OCI-LY7 (cell line): ENCODE measurements at regions of chr3 and their contacts with region 1.

Region 1: GRCh38 chr3:52444860-52445793 is at the start of gene SEMA3G:
- DNase-seq: peak; percentile 72
- H3K4me3 ChIP-seq: no peak within 1 kb of the TSS
- H3K27ac ChIP-seq: no peak within 1 kb of the TSS
- H3K4me1 ChIP-seq: no peaks in the 10 kb centered on the region
- CTCF ChIP-seq: peak; percentile 48
- total RNA-seq, gene SEMA3G: not detected in 2 replicates

Region 2: GRCh38 chr3:52001443-52001974 is 443.6 kb before region 1 on chr3:
- CTCF ChIA-PET with region 1: no interaction called
- POLR2A ChIA-PET with region 1: no interaction called
- intact Hi-C with region 1: loop called (anchors 5 kb)
- DNase-seq: peak; percentile 90
- H3K4me3 ChIP-seq: no peak overlapping the region
- H3K27ac ChIP-seq: no peak overlapping the region
- H3K4me1 ChIP-seq: peaks cover 15% of the 10 kb centered on the region
- CTCF ChIP-seq: peak; percentile 99

Region 3: DNA sequence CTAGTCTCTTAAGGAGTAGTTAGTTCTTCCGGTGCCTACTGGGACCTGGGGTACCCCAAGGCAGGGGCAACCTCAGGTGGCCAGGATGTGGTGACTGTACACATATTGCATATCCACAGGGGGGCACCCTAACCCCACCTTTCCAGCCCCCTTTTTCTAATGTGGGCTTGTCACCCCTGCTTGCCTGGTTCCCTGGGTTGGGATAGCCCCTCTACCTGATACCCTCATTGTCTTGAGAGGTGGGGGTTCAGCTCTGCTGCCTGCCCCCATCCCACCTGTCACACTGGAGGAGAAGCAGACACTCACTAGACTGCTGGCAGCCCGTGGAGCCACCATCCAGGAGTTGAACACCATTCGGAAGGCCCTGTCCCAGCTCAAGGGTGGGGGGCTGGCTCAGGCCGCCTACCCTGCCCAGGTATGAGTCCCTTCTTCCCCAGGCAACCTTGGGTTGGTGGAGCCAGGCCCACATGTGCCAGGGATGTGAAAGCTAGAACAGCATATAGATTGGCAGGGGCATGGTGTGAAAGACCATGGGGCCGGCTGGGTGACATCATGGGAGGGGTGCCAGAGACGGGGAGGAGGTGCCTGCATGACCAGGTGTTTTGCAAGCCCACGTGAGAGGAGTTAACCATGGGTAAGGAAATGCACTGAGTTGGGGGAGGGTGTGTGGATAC is 153.5 kb before region 1 on chr3:
- CTCF ChIA-PET with region 1: no interaction called
- POLR2A ChIA-PET with region 1: no interaction called
- intact Hi-C with region 1: loop called (anchors 1 kb)
- DNase-seq: peak; percentile 71
- H3K4me3 ChIP-seq: no peak overlapping the region
- H3K27ac ChIP-seq: no peak overlapping the region
- H3K4me1 ChIP-seq: peaks cover 18% of the 10 kb centered on the region
- CTCF ChIP-seq: peak; percentile 89

Region 4: DNA sequence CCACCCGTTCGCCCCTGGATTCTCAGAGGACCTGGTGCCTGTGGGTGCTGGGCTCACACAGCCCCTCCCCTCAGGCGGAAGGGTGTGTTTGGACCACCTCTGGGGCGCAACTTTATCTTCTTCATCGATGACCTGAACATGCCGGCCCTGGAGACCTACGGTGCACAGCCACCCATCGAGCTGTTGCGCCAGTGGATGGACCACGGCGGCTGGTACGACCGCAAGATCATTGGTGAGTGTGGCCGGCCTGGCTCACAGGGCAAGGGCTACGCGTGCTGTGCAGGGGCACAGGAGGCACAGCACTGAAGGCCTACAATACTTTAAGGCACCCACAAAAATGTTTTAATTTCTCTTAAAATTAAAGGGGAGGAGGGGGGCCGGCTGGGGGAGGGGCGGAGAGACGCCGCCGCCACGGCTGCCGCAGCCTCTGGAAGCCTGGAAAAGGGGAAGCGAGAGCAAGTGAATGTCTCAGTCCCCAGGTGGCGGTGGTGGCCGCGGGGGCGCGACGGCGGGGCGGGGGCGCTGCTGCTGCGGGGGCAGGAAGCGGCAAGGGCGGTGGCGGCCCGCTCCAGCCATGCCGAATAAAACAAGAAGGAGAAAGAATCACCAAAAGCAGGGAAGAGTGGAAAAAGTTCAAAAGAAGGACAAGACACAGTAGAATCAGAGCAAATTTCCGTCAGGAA is 72.2 kb before region 1 on chr3:
- CTCF ChIA-PET with region 1: no interaction called
- POLR2A ChIA-PET with region 1: interaction called, 4 read pairs
- intact Hi-C with region 1: loop called (anchors 10 kb)
- DNase-seq: peak; percentile 84
- H3K4me3 ChIP-seq: peak overlapping the region; percentile 49
- H3K27ac ChIP-seq: peak overlapping the region; percentile 39
- H3K4me1 ChIP-seq: peaks cover 33% of the 10 kb centered on the region
- CTCF ChIP-seq: peak; percentile 60

Region 5: DNA sequence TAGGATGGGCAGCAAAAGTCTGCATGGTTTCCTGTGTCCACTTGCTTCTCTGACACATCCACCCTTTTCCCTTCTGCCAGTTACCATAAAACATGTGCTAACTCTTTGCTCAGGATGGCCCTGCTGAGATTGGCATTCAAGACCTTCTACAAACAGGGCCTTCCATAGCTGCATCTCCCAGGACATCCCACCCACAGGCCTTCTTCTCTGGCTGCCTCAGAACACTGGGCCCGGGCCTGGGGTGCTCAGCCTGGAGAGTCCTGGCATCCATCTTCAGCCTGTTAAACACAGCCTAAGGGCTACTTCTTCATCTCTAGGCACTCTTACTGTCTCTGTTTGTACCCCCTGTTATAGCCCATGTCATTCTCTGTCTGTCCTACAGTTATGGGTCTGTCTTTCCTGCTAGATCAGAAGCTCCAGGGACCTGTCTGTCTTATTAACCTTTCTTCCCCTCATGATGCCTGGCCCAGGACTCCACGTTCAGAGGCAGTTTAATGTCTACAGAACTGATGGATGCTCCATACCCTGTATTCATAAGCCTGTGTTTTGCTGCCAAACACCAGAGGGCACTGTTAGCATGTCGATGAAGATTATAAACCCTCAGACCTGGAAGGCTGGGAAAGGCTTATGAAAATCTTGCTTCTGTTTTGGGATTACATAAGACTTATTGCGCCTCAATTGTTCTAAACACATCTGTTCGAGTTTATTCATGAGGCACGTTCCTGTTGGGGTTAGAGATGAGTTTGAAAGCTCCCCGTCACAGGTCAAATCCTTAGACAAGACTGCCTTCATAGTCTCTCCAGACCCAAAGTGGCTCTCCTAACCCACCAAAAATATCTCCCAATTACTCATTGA is 16.7 kb before region 1 on chr3:
- CTCF ChIA-PET with region 1: interaction called, 3 read pairs
- POLR2A ChIA-PET with region 1: interaction called, 6 read pairs
- intact Hi-C with region 1: loop called (anchors 1 kb)
- DNase-seq: peak; percentile 67
- H3K4me3 ChIP-seq: no peak overlapping the region
- H3K27ac ChIP-seq: no peak overlapping the region
- H3K4me1 ChIP-seq: no peaks in the 10 kb centered on the region
- CTCF ChIP-seq: peak; percentile 96